Right ventricle myocardium superior (tissue), 1 donor: ENCODE measurements at regions of chr5 and their contacts with region 1.

Region 1: GRCh38 chr5:91419571-91420537 is 36.7 kb upstream of the ARRDC3 start:
- DNase-seq: peak; percentile 44
- ATAC-seq: peak; percentile 56

Region 2: GRCh38 chr5:90865180-90865579 is 554.7 kb before region 1 on chr5:
- intact Hi-C with region 1: loop called (anchors 2 kb)
- DNase-seq: no peak
- ATAC-seq: no peak